Ascending aorta (tissue), 2 donors: ENCODE measurements at regions of chr12 and their contacts with region 1.

Region 1: DNA sequence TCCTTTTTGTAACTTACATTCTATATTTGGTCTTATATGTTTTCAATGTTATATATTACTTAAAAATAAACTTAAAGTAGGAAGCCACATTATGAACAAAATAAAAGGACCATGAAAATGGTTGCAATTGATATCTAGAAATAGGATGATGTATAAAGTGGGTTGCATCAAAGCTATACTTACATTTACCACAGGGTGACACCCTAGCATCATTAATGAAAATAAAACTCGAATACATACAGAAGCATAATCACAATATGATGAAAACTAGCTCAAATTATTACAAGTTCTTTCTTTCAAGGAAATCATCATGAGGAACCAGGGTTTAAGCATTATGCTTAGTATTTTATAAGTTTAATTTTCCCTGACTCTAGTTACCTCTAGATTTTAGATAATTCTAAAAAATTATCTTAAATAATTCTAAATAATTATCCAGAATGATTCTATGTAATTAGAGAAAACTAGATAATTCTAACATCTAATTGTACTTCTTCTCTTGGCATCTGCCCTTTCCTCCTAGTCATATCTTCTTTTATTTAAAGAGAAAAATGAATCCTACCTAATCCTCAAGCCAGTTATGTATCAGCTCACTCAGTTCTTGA is 31.2 kb downstream of the TAS2R7 start:
- DNase-seq: no peak
- H3K4me3 ChIP-seq: no peak overlapping the region
- H3K27ac ChIP-seq: no peak overlapping the region
- H3K4me1 ChIP-seq: no peaks in the 10 kb centered on the region
- H3K27me3 ChIP-seq: no peaks in the 10 kb centered on the region
- CTCF ChIP-seq: peak; percentile 57 to 71 (median 68)

Region 2: DNA sequence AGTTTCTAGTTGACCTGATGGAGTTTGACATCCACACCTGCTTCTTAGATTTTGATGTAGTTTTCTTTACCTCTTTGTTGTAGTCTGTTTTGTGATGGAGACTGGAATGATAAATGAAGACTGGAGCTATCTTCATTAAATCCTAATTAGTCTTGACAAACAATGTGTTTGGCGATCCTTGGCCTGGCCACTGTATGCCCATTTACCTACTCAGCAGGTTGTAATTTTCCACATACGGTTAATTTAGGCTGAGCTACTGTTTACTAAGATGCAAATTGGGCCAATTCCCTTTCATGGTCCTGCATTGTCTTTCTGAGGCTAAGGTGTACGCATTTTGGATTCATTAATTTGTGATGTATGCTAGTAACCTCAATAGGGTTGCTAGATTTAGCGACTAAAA is 31.4 kb after region 1 on chr12 and contains the start of gene TAS2R7:
- intact Hi-C with region 1: no loop called
- DNase-seq: no peak
- H3K4me3 ChIP-seq: no peak within 1 kb of the TSS
- H3K27ac ChIP-seq: no peak within 1 kb of the TSS
- H3K4me1 ChIP-seq: no peaks in the 10 kb centered on the region
- H3K27me3 ChIP-seq: no peaks in the 10 kb centered on the region
- CTCF ChIP-seq: no peak
- total RNA-seq, gene TAS2R7: not detected

Region 3: GRCh38 chr12:10849425-10849878 is 78.2 kb after region 1 on chr12 and contains the start of gene PRR4:
- intact Hi-C with region 1: no loop called
- DNase-seq: no peak
- H3K4me3 ChIP-seq: no peak within 1 kb of the TSS
- H3K27ac ChIP-seq: no peak within 1 kb of the TSS
- H3K4me1 ChIP-seq: no peaks in the 10 kb centered on the region
- H3K27me3 ChIP-seq: no peaks in the 10 kb centered on the region
- CTCF ChIP-seq: no peak
- total RNA-seq, gene PRR4: not detected

Region 4: DNA sequence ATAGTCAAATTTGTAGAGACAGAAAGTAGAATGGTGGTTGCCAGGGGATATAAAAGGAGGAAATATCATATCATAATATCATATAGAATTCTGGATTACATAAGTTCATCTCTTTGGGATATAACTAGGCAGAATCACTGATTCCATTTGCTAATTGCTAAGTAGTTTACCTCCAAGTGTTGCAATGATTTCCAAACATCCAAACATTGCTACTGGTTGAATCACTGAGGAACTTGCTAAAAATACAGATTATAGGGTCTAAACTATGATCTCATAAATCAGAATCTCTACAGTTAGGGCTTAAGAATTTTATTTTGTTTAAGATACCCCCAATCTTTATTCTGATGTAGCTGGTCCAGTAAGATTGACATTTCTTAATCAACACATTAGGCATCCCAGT is 431.6 kb after region 1 on chr12:
- intact Hi-C with region 1: loop called (anchors 2 kb)
- DNase-seq: no peak
- H3K4me3 ChIP-seq: no peak overlapping the region
- H3K27ac ChIP-seq: no peak overlapping the region
- H3K4me1 ChIP-seq: no peaks in the 10 kb centered on the region
- H3K27me3 ChIP-seq: no peaks in the 10 kb centered on the region
- CTCF ChIP-seq: no peak